Body of pancreas (tissue), 4 donors: ENCODE measurements at regions of chr7 and their contacts with region 1.

Region 1: DNA sequence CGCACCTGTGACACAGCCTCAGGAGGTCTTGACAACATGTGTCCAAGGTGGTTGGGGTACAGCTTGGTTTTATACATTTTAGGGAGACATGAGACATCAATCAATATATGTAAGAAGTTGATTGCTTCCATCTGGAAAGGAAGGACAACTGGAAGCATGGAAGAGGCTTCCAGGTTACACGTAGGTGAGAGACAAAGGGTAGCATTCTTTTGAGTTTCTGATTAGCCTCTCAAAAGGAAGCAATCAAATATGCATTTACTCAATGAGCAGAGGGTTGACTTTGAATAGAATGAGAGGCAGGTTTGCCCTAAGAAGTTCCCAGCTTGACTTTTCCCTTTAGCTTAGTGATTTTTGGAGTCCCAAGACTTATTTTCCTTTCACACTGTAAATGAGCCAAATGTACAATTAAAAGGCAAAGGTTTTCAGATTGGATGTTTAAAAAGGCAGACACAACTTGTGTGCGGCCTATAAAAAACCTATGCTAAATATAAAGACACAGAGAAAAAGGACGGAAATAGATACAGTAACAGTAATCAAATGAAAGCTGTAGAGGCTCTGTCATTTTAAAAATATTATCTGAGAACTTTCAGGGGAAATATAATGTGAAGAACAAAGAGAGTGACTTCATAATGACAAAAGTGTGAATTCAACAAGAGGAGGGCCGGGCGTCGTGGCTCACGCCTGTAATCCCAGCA is 65.7 kb upstream of the LANCL2 start:
- DNase-seq: no peak
- ATAC-seq: no peak
- H3K4me3 ChIP-seq: no peak overlapping the region
- H3K27ac ChIP-seq: no peak overlapping the region
- H3K4me1 ChIP-seq: no peaks in the 10 kb centered on the region
- H3K27me3 ChIP-seq: no peaks in the 10 kb centered on the region
- CTCF ChIP-seq: no peak
- POLR2A ChIP-seq: no peak

Region 2: GRCh38 chr7:55158541-55159382 is 140.7 kb before region 1 on chr7:
- intact Hi-C with region 1: no loop called
- DNase-seq: no peak
- ATAC-seq: no peak
- H3K4me3 ChIP-seq: no peak overlapping the region
- H3K27ac ChIP-seq: no peak overlapping the region
- H3K4me1 ChIP-seq: no peaks in the 10 kb centered on the region
- H3K27me3 ChIP-seq: no peaks in the 10 kb centered on the region
- CTCF ChIP-seq: no peak
- POLR2A ChIP-seq: no peak

Region 3: GRCh38 chr7:55351263-55351662 is 51.8 kb after region 1 on chr7:
- intact Hi-C with region 1: loop called (anchors 10 kb)
- DNase-seq: no peak
- ATAC-seq: no peak
- H3K4me3 ChIP-seq: no peak overlapping the region
- H3K27ac ChIP-seq: no peak overlapping the region
- H3K4me1 ChIP-seq: no peaks in the 10 kb centered on the region
- H3K27me3 ChIP-seq: no peaks in the 10 kb centered on the region
- CTCF ChIP-seq: no peak
- POLR2A ChIP-seq: no peak